ENCODE measurements at regions of chr7 and their contacts with region 1.

Region 1: GRCh38 chr7:100673300-100673941 is at the start of gene GNB2:
- DNase-seq: peak; percentile 92 to 100 (median 96)
- ATAC-seq: peak; percentile 75
- H3K4me3 ChIP-seq: peak within 1 kb of the TSS; percentile 82
- H3K4me3 Mint-ChIP-seq: peak within 1 kb of the TSS; percentile 89 to 99 (median 96)
- H3K27ac ChIP-seq: peak within 1 kb of the TSS; percentile 98
- H3K27ac Mint-ChIP-seq: peak within 1 kb of the TSS; percentile 88 to 97 (median 95)
- H3K4me1 ChIP-seq: no peaks in the 10 kb centered on the region
- H3K4me1 Mint-ChIP-seq: peaks cover 9 to 25% (median 15%) of the 10 kb centered on the region in 7 donors
- H3K27me3 ChIP-seq: no peaks in the 10 kb centered on the region
- H3K27me3 Mint-ChIP-seq: peaks cover 0 to 17% (median 0%) of the 10 kb centered on the region in 5 donors
- total RNA-seq, gene GNB2: 98.2 to 215 (median 132) TPM

Region 2: DNA sequence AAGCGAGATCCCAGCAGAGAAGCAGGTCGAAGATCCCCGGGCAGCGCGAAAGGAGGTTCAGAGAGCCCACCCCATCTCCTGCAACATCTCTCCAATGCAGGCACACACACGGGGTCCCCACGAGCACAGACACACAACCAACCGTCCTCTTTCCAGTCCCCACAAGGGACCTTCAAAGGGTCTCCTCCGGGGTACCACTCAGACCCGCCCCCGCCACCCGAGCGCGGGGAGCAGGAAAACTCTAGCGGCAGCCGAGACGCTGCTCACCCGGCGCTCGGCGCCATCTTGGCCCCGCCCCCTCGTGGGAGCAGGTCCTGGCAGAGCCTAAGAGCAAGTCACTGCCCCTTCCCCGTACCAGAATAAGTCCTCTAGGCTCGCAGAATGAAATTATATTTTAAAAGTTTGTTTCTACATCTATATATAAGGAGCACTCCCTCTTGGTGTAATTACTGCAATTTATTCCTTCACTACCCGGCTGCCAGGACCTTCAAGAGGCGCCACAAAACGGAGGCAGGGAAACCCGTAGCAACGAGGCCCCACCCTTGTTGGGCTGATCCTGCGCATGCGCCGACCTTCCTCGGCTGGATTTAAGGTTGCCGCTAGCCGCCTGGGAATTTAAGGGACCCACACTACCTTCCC is 554.2 kb before region 1 on chr7 and contains the starts of genes CNPY4 and TAF6:
- CTCF ChIA-PET with region 1: no interaction called
- POLR2A ChIA-PET with region 1: interaction called, 3 read pairs
- intact Hi-C with region 1: loop called in 1 of 2 experiments (anchors 1 kb)
- DNase-seq: peak; percentile 88 to 97 (median 95)
- ATAC-seq: peak; percentile 88
- H3K4me3 ChIP-seq: peak within 1 kb of the TSS; percentile 100
- H3K4me3 Mint-ChIP-seq: peak within 1 kb of the TSS; percentile 90 to 100 (median 98)
- H3K27ac ChIP-seq: peak within 1 kb of the TSS; percentile 88
- H3K27ac Mint-ChIP-seq: peak within 1 kb of the TSS; percentile 97 to 99 (median 98)
- H3K4me1 ChIP-seq: peaks cover 12 to 19% of the 10 kb centered on the region in 2 donors
- H3K4me1 Mint-ChIP-seq: peaks cover 18 to 34% (median 28%) of the 10 kb centered on the region in 7 donors
- H3K27me3 ChIP-seq: no peaks in the 10 kb centered on the region
- H3K27me3 Mint-ChIP-seq: no peaks in the 10 kb centered on the region
- total RNA-seq, gene CNPY4: 22.1 to 68.2 (median 40.3) TPM
- total RNA-seq, gene TAF6: 39.5 to 68.1 (median 55.0) TPM

Region 3: GRCh38 chr7:100604028-100604975 is 69.1 kb before region 1 on chr7:
- CTCF ChIA-PET with region 1: no interaction called
- POLR2A ChIA-PET with region 1: interaction called, 4 read pairs
- intact Hi-C with region 1: loop called (anchors 1 kb)
- DNase-seq: peak in 8 of 9 donors; percentile 47 to 81 (median 59)
- ATAC-seq: peak; percentile 81
- H3K4me3 ChIP-seq: peak overlapping the region; percentile 70
- H3K4me3 Mint-ChIP-seq: peak overlapping the region; percentile 79 to 94 (median 87)
- H3K27ac ChIP-seq: peak overlapping the region; percentile 67
- H3K27ac Mint-ChIP-seq: peak overlapping the region; percentile 21 to 92 (median 84)
- H3K4me1 ChIP-seq: peaks cover 6 to 10% of the 10 kb centered on the region in 2 donors
- H3K4me1 Mint-ChIP-seq: peaks cover 7 to 35% (median 16%) of the 10 kb centered on the region in 7 donors
- H3K27me3 ChIP-seq: no peaks in the 10 kb centered on the region
- H3K27me3 Mint-ChIP-seq: peaks cover 0 to 15% (median 0%) of the 10 kb centered on the region in 5 donors

Region 4: GRCh38 chr7:100626530-100627237 is 46.7 kb before region 1 on chr7:
- CTCF ChIA-PET with region 1: no interaction called
- POLR2A ChIA-PET with region 1: interaction called, 5 read pairs
- intact Hi-C with region 1: loop called (anchors 1 kb)
- DNase-seq: peak; percentile 56 to 88 (median 81)
- ATAC-seq: peak; percentile 99
- H3K4me3 ChIP-seq: peak overlapping the region; percentile 58
- H3K4me3 Mint-ChIP-seq: peak overlapping the region; percentile 60 to 87 (median 76)
- H3K27ac ChIP-seq: peak overlapping the region; percentile 84
- H3K27ac Mint-ChIP-seq: peak overlapping the region; percentile 49 to 88 (median 75)
- H3K4me1 ChIP-seq: peaks cover 14 to 18% of the 10 kb centered on the region in 2 donors
- H3K4me1 Mint-ChIP-seq: peaks cover 26 to 58% (median 43%) of the 10 kb centered on the region in 7 donors
- H3K27me3 ChIP-seq: peaks cover 0 to 4% of the 10 kb centered on the region in 2 donors
- H3K27me3 Mint-ChIP-seq: no peaks in the 10 kb centered on the region

Region 5: DNA sequence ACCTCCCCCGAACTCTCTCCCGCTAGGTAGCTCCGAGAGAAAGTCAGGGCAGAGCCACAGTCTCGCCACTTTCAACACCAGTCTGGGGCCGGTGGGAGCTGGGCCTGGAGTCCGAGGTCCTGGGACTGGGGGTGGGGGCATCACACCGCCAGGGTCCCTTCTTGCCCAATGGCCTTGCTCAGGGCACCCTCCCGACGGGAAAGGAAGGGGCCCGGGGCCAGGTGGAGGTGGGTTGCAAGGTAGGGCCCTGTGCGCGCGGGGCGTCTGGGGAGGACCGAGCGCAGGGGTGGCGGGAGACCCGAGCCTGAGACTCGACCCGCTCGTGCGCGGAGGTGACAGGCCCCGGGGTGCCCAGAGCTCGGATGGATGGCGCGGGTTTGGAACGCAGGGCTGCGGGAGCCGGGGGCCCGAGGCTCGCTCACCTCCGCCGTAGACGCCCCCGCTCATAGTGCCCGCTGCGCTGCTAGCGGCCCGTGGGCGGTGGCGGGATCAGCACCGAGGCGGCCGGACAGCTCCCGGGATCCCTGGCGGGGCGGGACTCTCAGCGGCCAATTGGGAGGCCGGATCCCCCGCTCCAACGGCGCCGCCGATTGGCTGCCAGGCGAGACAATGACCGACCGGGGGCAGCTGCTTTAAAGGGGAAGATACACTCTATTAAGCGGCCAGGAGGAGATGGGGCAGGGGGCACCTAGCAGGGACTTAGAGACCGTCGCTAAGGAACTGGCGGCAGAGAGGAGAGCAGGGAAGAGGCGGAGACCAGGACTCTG is 17.3 kb before region 1 on chr7 and contains the start of gene ACTL6B:
- CTCF ChIA-PET with region 1: no interaction called
- POLR2A ChIA-PET with region 1: interaction called, 3 read pairs
- intact Hi-C with region 1: loop called (anchors 1 to 2 kb)
- DNase-seq: peak in 8 of 9 donors; percentile 40 to 83 (median 52)
- ATAC-seq: peak; percentile 84
- H3K4me3 ChIP-seq: no peak within 1 kb of the TSS
- H3K4me3 Mint-ChIP-seq: peak within 1 kb of the TSS in 1 of 10 donors; percentile 49
- H3K27ac ChIP-seq: no peak within 1 kb of the TSS
- H3K27ac Mint-ChIP-seq: no peak within 1 kb of the TSS
- H3K4me1 ChIP-seq: no peaks in the 10 kb centered on the region
- H3K4me1 Mint-ChIP-seq: peaks cover 0 to 6% (median 0%) of the 10 kb centered on the region in 7 donors
- H3K27me3 ChIP-seq: peaks cover 3 to 14% of the 10 kb centered on the region in 2 donors
- H3K27me3 Mint-ChIP-seq: peaks cover 26 to 57% (median 35%) of the 10 kb centered on the region in 5 donors
- total RNA-seq, gene ACTL6B: not detected

Region 6: DNA sequence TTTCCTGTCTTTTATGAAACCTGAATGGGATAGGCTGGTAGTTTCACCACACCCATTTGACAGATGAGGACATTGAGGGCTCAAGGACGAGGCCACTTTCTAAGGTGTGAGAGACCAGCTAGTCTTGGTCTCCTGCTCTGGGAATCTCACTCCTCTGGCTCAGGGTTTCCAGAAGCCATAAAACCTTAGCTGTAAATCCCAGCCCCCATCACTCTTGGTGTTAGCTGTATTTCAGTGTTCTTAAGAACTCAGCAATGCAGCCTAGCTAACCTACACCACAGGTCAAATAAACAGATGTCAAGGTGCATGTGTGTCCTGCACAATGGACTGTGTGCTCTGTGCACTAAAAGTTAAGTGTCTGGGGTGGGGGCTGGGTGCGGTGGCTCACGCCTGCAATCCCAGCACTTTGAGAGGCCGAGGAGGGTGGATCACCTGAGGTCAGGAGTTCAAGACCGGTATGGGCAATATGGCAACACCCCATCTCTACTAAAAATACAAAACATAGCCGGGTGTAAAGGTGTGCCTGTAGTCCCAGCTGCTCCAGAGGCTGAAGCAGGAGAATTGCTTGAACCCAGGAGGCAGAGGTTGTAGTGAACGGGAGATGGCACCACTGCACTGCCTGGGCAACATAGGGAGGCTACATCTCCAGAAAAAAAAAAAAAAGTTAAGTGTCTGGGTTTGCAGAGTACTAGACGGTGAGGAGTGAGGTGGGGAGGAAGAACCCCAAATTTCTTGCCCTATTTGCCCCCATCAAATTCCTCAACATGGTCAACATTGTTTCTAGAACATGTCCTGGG is 46.3 kb after region 1 on chr7:
- CTCF ChIA-PET with region 1: no interaction called
- POLR2A ChIA-PET with region 1: no interaction called
- intact Hi-C with region 1: no loop called
- DNase-seq: no peak
- ATAC-seq: no peak
- H3K4me3 ChIP-seq: no peak overlapping the region
- H3K4me3 Mint-ChIP-seq: peak overlapping the region in 2 of 10 donors; percentile 14 to 70
- H3K27ac ChIP-seq: no peak overlapping the region
- H3K27ac Mint-ChIP-seq: no peak overlapping the region
- H3K4me1 ChIP-seq: no peaks in the 10 kb centered on the region
- H3K4me1 Mint-ChIP-seq: peaks cover 0 to 5% (median 2%) of the 10 kb centered on the region in 7 donors
- H3K27me3 ChIP-seq: peaks cover 0 to 9% of the 10 kb centered on the region in 2 donors
- H3K27me3 Mint-ChIP-seq: peaks cover 44 to 51% (median 45%) of the 10 kb centered on the region in 5 donors

Region 7: DNA sequence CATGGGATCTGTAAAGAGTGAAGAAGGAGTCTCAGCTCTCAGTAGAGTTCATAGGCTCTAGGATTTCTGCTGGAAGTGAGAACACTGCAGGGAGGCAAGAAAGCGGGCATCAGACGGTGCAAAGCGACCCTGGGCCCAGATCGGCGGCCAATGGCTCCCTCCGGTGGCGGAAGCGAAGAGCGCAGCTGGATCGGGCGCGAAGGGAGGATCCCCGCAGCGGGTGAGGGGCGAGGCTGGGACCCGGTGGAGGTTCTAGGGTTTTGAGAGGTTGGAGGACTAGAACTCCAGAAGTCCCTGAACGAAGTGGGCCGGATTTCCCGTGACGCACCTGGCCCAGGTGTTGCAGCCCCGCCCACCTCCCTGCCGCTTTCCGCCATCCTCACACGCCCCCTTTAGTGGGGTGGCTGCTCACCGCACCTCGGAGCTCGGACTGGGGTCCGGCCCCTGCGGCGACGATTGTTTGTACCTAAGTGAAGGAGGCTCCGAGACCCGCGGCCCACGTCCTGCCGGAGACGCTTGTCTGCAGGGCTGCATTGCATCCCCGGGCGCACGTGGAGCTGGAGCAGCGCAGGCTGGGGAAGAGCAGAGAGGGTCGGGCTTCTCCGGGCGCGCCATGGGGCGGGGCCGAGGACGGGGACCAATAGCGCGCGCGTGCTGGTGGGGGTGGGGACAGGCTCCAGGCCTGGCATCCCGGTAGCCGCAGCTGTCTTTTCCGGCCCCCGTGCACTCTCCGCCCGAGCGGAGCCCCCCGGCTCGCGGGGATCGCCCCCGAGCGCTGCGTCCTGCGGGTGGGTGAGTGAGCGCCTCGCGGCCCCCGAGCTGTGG is 178.8 kb after region 1 on chr7 and contains the start of gene SLC12A9:
- CTCF ChIA-PET with region 1: no interaction called
- POLR2A ChIA-PET with region 1: interaction called, 3 read pairs
- intact Hi-C with region 1: loop called in 1 of 2 experiments (anchors 1 kb)
- DNase-seq: peak; percentile 71 to 90 (median 85)
- ATAC-seq: peak; percentile 96
- H3K4me3 ChIP-seq: peak within 1 kb of the TSS; percentile 73
- H3K4me3 Mint-ChIP-seq: peak within 1 kb of the TSS; percentile 89 to 95 (median 92)
- H3K27ac ChIP-seq: peak within 1 kb of the TSS; percentile 76
- H3K27ac Mint-ChIP-seq: peak within 1 kb of the TSS; percentile 71 to 97 (median 90)
- H3K4me1 ChIP-seq: peaks cover 8 to 16% of the 10 kb centered on the region in 2 donors
- H3K4me1 Mint-ChIP-seq: peaks cover 0 to 31% (median 19%) of the 10 kb centered on the region in 7 donors
- H3K27me3 ChIP-seq: no peaks in the 10 kb centered on the region
- H3K27me3 Mint-ChIP-seq: no peaks in the 10 kb centered on the region
- total RNA-seq, gene SLC12A9: 50.4 to 78.6 (median 62.7) TPM